Left ventricle myocardium superior (tissue), 1 donor: ENCODE measurements at regions of chr3 and their contacts with region 1.

Region 1: GRCh38 chr3:62332835-62333244 is 40.5 kb downstream of the FEZF2 start:
- DNase-seq: no peak
- ATAC-seq: no peak

Region 2: DNA sequence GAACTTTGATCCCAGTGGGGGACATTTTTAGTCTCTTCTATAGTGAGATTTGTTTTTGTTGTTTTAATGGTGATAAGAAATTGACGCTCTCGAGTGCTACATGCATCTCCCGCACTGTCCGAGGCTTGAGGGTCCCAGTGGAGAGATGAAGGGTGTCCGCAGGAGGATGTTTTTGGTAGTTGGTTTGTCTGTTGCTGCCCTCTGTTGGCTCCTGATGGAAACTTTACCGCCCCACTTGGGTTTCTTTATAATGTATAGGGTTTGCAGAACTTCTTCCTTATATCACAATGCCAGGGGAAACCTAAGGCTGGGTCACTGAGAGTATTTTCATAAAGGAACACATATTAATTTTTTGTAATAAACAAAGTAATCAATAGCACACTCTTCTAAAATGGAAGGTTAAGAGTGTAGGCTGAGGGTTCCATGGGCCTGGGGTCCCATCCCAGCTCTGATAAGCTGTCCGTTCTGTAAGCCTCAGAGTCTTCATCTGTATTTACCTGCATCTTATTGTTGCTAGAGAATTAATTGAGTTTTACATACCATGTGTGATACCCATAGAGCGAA is 225.8 kb after region 1 on chr3:
- intact Hi-C with region 1: loop called (anchors 5 kb)
- DNase-seq: no peak
- ATAC-seq: no peak